Gastrocnemius medialis (tissue), 4 donors: ENCODE measurements at regions of chr15 and their contacts with region 1.

Region 1: GRCh38 chr15:35743320-35743719 is 197.4 kb upstream of the DPH6 start:
- DNase-seq: no peak
- ATAC-seq: no peak
- H3K4me3 ChIP-seq: no peak overlapping the region
- H3K27ac ChIP-seq: no peak overlapping the region
- H3K4me1 ChIP-seq: no peaks in the 10 kb centered on the region
- H3K27me3 ChIP-seq: no peaks in the 10 kb centered on the region
- CTCF ChIP-seq: no peak
- POLR2A ChIP-seq: no peak

Region 2: GRCh38 chr15:35349916-35350315 is 393.4 kb before region 1 on chr15:
- in situ Hi-C with region 1: no loop called
- intact Hi-C with region 1: no loop called
- DNase-seq: no peak
- ATAC-seq: no peak
- H3K4me3 ChIP-seq: peak overlapping the region in 1 of 4 donors; percentile 20
- H3K27ac ChIP-seq: no peak overlapping the region
- H3K4me1 ChIP-seq: peaks cover 9 to 13% of the 10 kb centered on the region in 2 donors
- H3K27me3 ChIP-seq: no peaks in the 10 kb centered on the region
- CTCF ChIP-seq: no peak
- POLR2A ChIP-seq: no peak

Region 3: GRCh38 chr15:35719964-35720507 is 23.3 kb before region 1 on chr15:
- in situ Hi-C with region 1: no loop called
- intact Hi-C with region 1: loop called (anchors 1 kb)
- DNase-seq: no peak
- ATAC-seq: no peak
- H3K4me3 ChIP-seq: no peak overlapping the region
- H3K27ac ChIP-seq: no peak overlapping the region
- H3K4me1 ChIP-seq: no peaks in the 10 kb centered on the region
- H3K27me3 ChIP-seq: no peaks in the 10 kb centered on the region
- CTCF ChIP-seq: no peak
- POLR2A ChIP-seq: no peak